ENCODE measurements at regions of chr5 and their contacts with region 1.

Region 1: GRCh38 chr5:68239487-68239886 is 23.9 kb downstream of the PIK3R1 start:
- DNase-seq: peak; percentile 94 to 99 (median 98)
- H3K4me3 ChIP-seq: peak overlapping the region in 4 of 7 experiments; percentile 15 to 51 (median 31)
- H3K27ac ChIP-seq: peak overlapping the region; percentile 84 to 89
- H3K4me1 ChIP-seq: peaks cover 39 to 83% (median 70%) of the 10 kb centered on the region in 4 experiments
- H3K27me3 ChIP-seq: no peaks in the 10 kb centered on the region

Region 2: GRCh38 chr5:68187268-68188055 is 52.0 kb before region 1 on chr5:
- CTCF ChIA-PET with region 1: no interaction called
- POLR2A ChIA-PET with region 1: no interaction called
- DNase-seq: no peak
- H3K4me3 ChIP-seq: peak overlapping the region in 1 of 7 experiments; percentile 11
- H3K27ac ChIP-seq: no peak overlapping the region
- H3K4me1 ChIP-seq: peaks cover 0 to 6% (median 0%) of the 10 kb centered on the region in 4 experiments
- H3K27me3 ChIP-seq: no peaks in the 10 kb centered on the region

Region 3: GRCh38 chr5:68215208-68215897 is 24.1 kb before region 1 on chr5 and contains the start of gene PIK3R1:
- CTCF ChIA-PET with region 1: interaction called, 29 read pairs
- POLR2A ChIA-PET with region 1: interaction called, 61 read pairs
- DNase-seq: peak; percentile 90 to 97 (median 96)
- H3K4me3 ChIP-seq: peak within 1 kb of the TSS; percentile 86 to 100 (median 98)
- H3K27ac ChIP-seq: peak within 1 kb of the TSS; percentile 85 to 93
- H3K4me1 ChIP-seq: peaks cover 16 to 42% (median 30%) of the 10 kb centered on the region in 4 experiments
- H3K27me3 ChIP-seq: no peaks in the 10 kb centered on the region

Region 4: GRCh38 chr5:68225188-68225910 is 14.1 kb before region 1 on chr5:
- CTCF ChIA-PET with region 1: interaction called, 17 read pairs
- POLR2A ChIA-PET with region 1: no interaction called
- DNase-seq: peak in 2 of 3 donors; percentile 43 to 52
- H3K4me3 ChIP-seq: no peak overlapping the region
- H3K27ac ChIP-seq: no peak overlapping the region
- H3K4me1 ChIP-seq: peaks cover 11 to 57% (median 45%) of the 10 kb centered on the region in 4 experiments
- H3K27me3 ChIP-seq: no peaks in the 10 kb centered on the region

Region 5: GRCh38 chr5:68279984-68280383 is 40.5 kb after region 1 on chr5:
- CTCF ChIA-PET with region 1: no interaction called
- POLR2A ChIA-PET with region 1: no interaction called
- DNase-seq: no peak
- H3K4me3 ChIP-seq: no peak overlapping the region
- H3K27ac ChIP-seq: no peak overlapping the region
- H3K4me1 ChIP-seq: peaks cover 0 to 3% (median under 1%) of the 10 kb centered on the region in 4 experiments
- H3K27me3 ChIP-seq: no peaks in the 10 kb centered on the region

Measured in common myeloid progenitor, CD34-positive (primary cell).